CD4-positive, alpha-beta memory T cell (primary cell): ENCODE measurements at regions of chr13 and their contacts with region 1.

Region 1: DNA sequence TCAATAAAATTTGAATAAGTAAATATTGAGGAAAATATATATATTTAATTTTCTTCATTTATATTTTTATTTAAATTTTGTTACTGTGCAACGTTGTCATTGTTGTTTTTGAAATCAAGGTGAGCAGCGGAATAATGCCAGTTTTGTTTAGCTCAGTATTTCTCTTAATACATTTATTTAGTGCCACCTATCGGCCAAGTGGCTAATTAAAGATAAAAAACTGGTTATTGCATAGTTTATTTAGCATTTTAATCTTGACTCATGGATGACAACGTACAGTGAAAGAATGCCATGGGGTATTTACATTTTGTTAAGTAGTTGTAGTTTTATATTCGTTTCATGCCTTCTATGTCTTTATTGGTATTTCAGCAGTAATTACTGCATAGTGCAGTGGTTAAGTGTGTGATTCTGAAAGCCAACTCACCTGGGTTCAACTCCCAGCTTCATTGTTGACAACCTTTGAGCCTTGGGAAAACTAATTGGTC is 265.9 kb downstream of the MYO16 start:
- DNase-seq: peak in 4 of 5 donors; percentile 19 to 31 (median 26)
- H3K4me3 ChIP-seq: no peak overlapping the region
- H3K4me3 Mint-ChIP-seq: no peak overlapping the region
- H3K27ac ChIP-seq: no peak overlapping the region
- H3K27ac Mint-ChIP-seq: no peak overlapping the region
- H3K4me1 ChIP-seq: peaks cover 8% of the 10 kb centered on the region
- H3K4me1 Mint-ChIP-seq: peaks cover 5 to 14% (median 10%) of the 10 kb centered on the region in 4 donors
- H3K27me3 ChIP-seq: no peaks in the 10 kb centered on the region
- H3K27me3 Mint-ChIP-seq: peaks cover 0 to 1% of the 10 kb centered on the region in 2 donors

Region 2: DNA sequence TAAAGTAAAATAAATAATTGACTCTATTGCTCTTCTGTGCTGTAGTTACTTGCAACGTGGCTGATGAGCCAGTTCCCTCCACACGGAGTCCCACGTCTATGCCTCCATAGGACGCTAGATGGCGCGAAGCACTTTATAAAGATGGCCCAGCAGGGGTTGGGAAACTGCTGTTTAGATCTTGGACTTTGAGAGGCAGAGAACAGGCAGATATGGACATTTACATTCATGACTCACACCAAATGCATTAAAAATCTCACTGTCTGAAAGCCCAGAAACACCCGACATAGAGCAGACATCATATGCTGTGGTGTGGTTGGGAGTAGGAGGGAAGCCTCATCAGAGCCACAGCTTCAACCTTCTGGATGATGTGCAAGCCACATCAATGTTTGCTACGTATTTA is 1684.2 kb before region 1 on chr13:
- CTCF ChIA-PET with region 1: no interaction called
- POLR2A ChIA-PET with region 1: no interaction called
- intact Hi-C with region 1: no loop called
- DNase-seq: peak in 2 of 5 donors; percentile 1 to 12
- H3K4me3 ChIP-seq: no peak overlapping the region
- H3K4me3 Mint-ChIP-seq: no peak overlapping the region
- H3K27ac ChIP-seq: no peak overlapping the region
- H3K27ac Mint-ChIP-seq: no peak overlapping the region
- H3K4me1 ChIP-seq: no peaks in the 10 kb centered on the region
- H3K4me1 Mint-ChIP-seq: no peaks in the 10 kb centered on the region
- H3K27me3 ChIP-seq: no peaks in the 10 kb centered on the region
- H3K27me3 Mint-ChIP-seq: peaks cover 0 to 3% of the 10 kb centered on the region in 2 donors

Region 3: GRCh38 chr13:108176685-108177274 is 718.5 kb before region 1 on chr13:
- CTCF ChIA-PET with region 1: interaction called, 7 read pairs
- POLR2A ChIA-PET with region 1: no interaction called
- intact Hi-C with region 1: loop called (anchors 1 kb)
- DNase-seq: peak; percentile 33 to 58 (median 38)
- H3K4me3 ChIP-seq: no peak overlapping the region
- H3K4me3 Mint-ChIP-seq: no peak overlapping the region
- H3K27ac ChIP-seq: no peak overlapping the region
- H3K27ac Mint-ChIP-seq: no peak overlapping the region
- H3K4me1 ChIP-seq: no peaks in the 10 kb centered on the region
- H3K4me1 Mint-ChIP-seq: no peaks in the 10 kb centered on the region
- H3K27me3 ChIP-seq: no peaks in the 10 kb centered on the region
- H3K27me3 Mint-ChIP-seq: peaks cover 0 to 7% of the 10 kb centered on the region in 2 donors

Region 4: GRCh38 chr13:108322206-108322824 is 572.9 kb before region 1 on chr13:
- CTCF ChIA-PET with region 1: interaction called, 17 read pairs
- POLR2A ChIA-PET with region 1: interaction called, 4 read pairs
- intact Hi-C with region 1: loop called (anchors 1 kb)
- DNase-seq: peak in 4 of 5 donors; percentile 51 to 60 (median 54)
- H3K4me3 ChIP-seq: no peak overlapping the region
- H3K4me3 Mint-ChIP-seq: peak overlapping the region in 2 of 8 donors; percentile 37 to 40
- H3K27ac ChIP-seq: no peak overlapping the region
- H3K27ac Mint-ChIP-seq: peak overlapping the region in 1 of 7 donors; percentile 41
- H3K4me1 ChIP-seq: peaks cover 21% of the 10 kb centered on the region
- H3K4me1 Mint-ChIP-seq: peaks cover 13 to 49% (median 33%) of the 10 kb centered on the region in 4 donors
- H3K27me3 ChIP-seq: no peaks in the 10 kb centered on the region
- H3K27me3 Mint-ChIP-seq: no peaks in the 10 kb centered on the region

Region 5: DNA sequence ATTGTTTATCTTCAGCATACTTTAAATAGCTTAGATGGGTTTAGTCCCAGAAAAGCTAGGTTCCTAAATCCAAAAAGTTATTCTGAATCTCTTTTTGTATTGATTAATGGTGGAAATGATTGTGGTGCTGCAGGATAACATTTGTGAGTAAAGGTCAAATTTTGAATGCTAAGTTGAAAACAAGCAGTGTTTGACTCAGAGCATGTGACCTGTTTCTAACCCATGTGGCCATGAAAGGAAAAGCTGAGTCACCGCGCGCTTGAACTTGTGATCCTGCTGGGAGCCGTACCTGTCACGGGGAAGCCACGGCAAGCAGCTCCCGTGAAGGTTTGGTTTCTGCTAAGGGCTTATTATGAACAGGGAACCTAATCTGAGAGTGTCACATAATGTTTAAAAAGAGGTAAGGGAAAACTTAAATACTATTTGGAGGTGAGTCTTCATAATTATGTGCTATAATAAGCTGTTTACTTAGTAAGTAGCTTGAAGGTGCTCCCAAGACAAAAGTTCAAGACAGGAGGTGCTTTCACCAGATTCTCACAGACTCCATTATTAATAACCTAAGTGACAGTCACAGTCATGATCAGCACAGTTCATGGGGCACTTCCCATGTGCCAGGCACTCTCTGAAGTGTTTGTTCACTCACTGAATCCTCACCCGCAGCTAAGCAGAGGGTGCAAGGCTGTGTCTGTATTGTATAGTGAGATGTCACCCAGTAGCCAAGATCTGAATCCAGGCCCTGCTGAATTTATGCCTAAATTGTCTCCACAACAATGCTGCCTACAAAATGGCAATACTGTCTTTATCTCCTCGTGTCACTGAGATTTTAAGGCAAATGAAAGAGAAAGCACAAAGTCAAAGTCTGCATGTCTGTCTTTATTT is 20.6 kb after region 1 on chr13:
- CTCF ChIA-PET with region 1: interaction called, 24 read pairs
- POLR2A ChIA-PET with region 1: no interaction called
- intact Hi-C with region 1: no loop called
- DNase-seq: peak; percentile 19 to 84 (median 30)
- H3K4me3 ChIP-seq: no peak overlapping the region
- H3K4me3 Mint-ChIP-seq: peak overlapping the region in 7 of 8 donors; percentile 69 to 86 (median 78)
- H3K27ac ChIP-seq: no peak overlapping the region
- H3K27ac Mint-ChIP-seq: peak overlapping the region in 6 of 7 donors; percentile 32 to 81 (median 71)
- H3K4me1 ChIP-seq: peaks cover 16% of the 10 kb centered on the region
- H3K4me1 Mint-ChIP-seq: peaks cover 10 to 17% (median 13%) of the 10 kb centered on the region in 4 donors
- H3K27me3 ChIP-seq: no peaks in the 10 kb centered on the region
- H3K27me3 Mint-ChIP-seq: no peaks in the 10 kb centered on the region